BJ (cell line): ENCODE measurements at regions of chr1 and their contacts with region 1.

Region 1: GRCh38 chr1:156445789-156446263 is 54.7 kb downstream of the MEF2D start:
- DNase-seq: peak; percentile 13
- H3K4me3 ChIP-seq: no peak overlapping the region
- H3K27me3 ChIP-seq: peaks cover 33% of the 10 kb centered on the region
- CTCF ChIP-seq: peak; percentile 98

Region 2: DNA sequence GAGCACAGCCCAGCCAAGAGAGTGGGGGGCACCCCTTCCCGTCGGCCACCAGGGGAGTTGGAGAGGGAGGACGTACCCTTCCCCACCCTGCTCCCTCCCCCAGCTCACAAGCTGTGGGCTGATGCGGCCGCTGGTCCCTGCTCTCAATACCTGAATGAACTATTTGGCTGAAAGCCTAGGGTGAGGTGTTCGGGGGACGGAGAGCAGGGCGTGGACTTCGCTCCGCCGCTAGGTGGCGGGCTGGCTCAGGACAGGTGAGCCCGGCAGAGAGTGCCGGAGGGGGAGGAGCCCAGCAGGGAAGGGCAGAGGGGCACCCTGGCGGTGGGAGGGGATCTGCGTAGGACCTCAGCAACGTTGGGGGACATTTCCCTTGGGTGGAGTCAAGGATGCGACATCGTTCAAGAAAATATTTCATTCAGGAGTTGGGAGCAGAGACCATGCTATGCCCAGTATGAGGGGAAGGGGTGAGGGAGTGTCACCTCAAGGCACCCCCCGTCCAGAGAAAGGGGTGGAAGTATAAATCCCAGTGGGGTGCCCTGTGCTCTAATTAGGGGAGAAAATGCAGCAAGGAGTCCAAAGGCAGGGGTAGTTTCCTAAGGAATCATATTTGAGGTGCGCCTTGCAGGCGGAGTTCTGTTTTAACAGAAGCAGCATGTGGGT is 88.8 kb before region 1 on chr1:
- CTCF ChIA-PET with region 1: interaction called, 11 read pairs
- POLR2A ChIA-PET with region 1: no interaction called
- DNase-seq: no peak
- H3K4me3 ChIP-seq: no peak overlapping the region
- H3K27me3 ChIP-seq: peaks cover 19% of the 10 kb centered on the region
- CTCF ChIP-seq: peak; percentile 98

Region 3: DNA sequence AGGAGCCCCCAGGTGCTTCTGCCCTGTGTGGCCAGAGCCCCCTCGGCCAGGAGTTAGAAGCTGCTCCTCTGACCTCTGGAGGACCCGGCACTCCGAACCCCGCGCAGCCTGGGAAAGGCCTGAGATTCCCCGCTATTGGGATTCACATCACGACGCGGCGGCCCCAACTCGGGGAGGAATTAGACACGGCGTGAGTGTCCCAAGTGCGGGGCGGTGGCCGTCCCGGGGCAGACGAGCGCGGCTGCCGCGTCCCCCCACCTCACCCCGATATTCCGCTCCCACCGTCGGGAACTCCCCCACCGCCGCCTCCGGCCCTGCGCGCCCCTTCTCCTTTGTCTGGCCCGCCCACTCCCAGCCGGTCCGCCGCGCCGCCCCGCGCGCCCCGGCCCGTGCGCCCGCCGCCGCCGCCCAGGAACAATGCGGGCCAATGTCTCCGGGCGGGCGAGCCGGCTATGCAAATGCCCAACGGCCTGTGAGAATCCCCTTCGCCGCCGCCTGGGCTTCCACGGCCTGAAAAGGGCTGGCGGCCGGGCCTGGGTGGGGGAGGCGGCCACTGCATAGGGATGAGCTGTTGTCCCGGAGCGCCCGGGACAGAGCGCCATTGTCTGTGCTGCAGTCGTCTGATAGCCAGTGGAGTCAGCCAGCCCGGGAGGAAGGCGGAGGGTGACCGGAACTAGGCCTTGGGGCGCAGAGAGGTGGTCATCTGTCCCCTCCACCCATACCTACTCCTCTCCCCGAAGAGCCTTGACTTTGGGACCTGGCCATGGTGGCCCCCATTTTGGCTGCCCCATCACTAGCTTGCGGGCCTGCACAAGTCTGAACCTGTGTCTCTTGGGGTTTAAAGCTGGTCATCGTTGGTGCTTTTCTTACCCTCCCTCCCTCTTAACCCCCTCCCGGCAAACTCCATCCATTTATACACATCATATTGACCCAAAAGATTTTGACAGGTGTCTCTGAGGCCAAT is 57.4 kb before region 1 on chr1:
- CTCF ChIA-PET with region 1: interaction called, 172 read pairs
- POLR2A ChIA-PET with region 1: interaction called, 4 read pairs
- DNase-seq: no peak
- H3K4me3 ChIP-seq: no peak overlapping the region
- H3K27me3 ChIP-seq: peaks cover 34% of the 10 kb centered on the region
- CTCF ChIP-seq: no peak

Region 4: GRCh38 chr1:156421062-156421938 is 24.5 kb before region 1 on chr1:
- CTCF ChIA-PET with region 1: interaction called, 12 read pairs
- POLR2A ChIA-PET with region 1: no interaction called
- DNase-seq: no peak
- H3K4me3 ChIP-seq: no peak overlapping the region; the same call in 1 of the 2 replicates
- H3K27me3 ChIP-seq: peaks cover 69% of the 10 kb centered on the region
- CTCF ChIP-seq: no peak

Region 5: DNA sequence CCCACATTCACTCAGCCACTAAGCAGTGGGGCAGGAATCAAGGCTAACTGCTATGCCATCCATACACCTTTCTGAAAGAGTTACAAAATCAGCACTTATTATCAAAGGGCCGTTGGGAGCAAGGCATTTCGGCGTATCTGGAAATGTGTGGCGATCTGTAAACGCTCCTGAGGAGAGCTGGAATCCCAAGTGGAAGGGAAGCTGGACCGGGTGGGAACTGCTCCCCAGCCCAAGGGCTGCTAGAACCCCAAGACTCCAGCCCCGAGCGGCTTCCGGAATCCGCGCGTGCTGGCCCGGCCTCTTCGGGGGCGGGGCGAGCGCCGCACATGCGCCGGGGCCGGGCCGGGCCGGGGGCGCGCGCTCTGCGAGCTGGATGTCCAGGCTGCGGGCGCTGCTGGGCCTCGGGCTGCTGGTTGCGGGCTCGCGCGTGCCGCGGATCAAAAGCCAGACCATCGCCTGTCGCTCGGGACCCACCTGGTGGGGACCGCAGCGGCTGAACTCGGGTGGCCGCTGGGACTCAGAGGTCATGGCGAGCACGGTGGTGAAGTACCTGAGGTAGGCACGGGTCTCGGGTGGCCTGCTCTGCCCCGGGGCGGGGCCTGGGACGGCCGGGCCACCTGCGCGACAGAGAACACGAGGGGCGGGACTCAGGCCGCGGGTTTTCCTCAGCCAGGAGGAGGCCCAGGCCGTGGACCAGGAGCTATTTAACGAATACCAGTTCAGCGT is 145.8 kb after region 1 on chr1 and contains the start of gene NAXE:
- CTCF ChIA-PET with region 1: interaction called, 15 read pairs
- POLR2A ChIA-PET with region 1: no interaction called
- DNase-seq: no peak
- H3K4me3 ChIP-seq: peak within 1 kb of the TSS; percentile 54
- H3K27me3 ChIP-seq: no peaks in the 10 kb centered on the region
- CTCF ChIP-seq: no peak
- polyA plus RNA-seq, gene NAXE: 37.8 and 63.3 TPM in 2 replicates